Cardiac septum (tissue), 1 donor: ENCODE measurements at regions of chr17 and their contacts with region 1.

Region 1: DNA sequence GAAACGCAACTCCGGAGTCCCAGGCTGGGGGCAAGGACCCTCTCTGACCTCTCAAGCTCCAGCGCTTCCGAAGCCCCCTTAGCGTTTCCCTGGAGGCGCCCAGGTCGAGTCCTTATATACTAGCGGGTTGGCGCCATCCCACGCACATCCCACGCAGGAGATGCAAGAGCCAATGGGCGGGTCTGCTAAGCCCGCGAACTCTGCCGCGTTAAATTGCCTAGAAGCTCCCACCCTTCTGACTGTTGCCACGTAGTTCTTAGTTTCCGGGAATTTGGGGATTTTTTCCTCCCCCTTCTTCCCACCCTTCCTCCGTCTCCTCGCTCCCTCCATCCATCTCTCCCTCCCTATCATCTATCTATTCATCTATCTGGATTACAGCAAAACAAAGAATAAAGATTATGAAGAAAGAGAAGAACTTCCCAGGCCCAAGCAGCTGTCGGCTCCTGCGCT is at the start of gene SLFN11:
- DNase-seq: peak; percentile 92
- total RNA-seq, gene SLFN11: 23.0 TPM

Region 2: DNA sequence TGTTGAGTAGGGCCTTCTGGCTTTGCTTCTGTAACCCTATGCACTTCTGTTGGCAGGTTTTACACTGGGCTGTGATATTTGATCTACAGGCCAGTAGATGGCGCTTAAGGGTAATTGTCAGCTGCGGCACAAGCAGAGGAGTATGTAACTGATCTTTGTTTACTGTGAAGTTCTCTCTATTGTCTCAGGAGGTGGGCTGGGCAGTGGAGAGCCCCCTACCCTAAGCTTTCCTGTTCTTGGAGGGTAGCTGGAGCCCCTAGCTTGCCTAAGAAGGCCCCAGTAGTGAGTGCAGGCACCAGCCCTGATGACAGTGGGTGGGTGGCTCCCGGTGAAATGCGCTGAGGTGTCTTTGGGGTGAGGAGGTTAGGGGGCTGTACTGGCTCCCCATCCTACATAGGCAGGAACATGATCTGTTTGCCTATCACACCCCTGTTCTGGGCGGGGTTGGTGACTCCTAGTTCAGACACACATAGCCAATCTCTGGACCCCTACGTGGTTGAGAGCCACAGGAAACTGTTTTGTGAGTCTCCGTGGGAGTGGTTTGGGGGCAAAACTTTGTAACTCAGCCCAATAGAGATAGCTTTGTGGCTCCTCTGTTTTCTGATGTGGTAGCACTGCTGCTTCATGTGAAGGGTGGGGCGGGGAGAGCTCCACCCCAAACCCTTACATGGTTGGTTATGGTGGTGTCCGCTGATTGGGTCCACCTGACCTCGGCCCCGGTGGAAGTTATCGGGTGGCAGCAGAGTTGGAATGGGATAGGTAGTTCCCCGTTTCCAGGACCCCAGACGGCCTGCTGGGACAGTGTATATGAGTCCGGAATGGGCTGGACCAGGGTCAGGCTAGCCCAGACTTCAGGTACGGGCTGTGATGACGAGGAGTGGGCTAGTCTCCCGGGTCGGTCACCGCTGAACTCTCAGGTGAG is 60.5 kb before region 1 on chr17:
- intact Hi-C with region 1: loop called (anchors 5 kb)
- DNase-seq: no peak

Region 3: GRCh38 chr17:35432176-35433074 is 58.9 kb after region 1 on chr17 and contains the start of gene SLFN12:
- intact Hi-C with region 1: loop called (anchors 2 kb)
- DNase-seq: no peak
- total RNA-seq, gene SLFN12: 4.3 TPM

Region 4: DNA sequence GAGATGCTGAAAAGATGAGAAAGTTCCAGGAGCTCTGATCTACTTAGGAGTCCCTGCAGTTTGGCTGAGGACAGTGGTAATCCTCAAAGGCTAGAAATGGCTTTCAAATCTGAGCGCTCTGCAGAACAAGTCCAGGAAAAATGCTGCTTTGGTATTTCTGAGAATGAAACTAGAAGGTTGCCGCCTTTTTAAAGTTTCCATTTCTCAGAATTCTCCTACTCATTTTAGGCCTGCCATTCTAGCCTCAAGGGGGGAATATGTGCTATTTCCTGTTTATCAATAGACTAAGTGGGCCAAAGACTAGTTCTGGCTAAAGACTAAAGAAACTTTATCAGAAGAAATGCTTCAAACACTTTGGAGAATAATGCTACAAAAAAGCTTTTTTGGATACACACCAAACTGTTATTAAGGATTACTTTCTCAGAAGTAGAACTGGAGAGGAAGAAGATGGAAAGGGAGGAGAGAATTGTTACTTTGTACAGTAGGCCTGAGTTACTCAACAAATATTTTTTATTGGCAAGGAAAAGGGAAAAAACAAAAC is 164.1 kb after region 1 on chr17 and contains the start of gene SLFN12L:
- intact Hi-C with region 1: loop called (anchors 10 kb)
- DNase-seq: no peak
- total RNA-seq, gene SLFN12L: 0.92 TPM